Calu3 (cell line): ENCODE measurements at regions of chr2 and their contacts with region 1.

Region 1: DNA sequence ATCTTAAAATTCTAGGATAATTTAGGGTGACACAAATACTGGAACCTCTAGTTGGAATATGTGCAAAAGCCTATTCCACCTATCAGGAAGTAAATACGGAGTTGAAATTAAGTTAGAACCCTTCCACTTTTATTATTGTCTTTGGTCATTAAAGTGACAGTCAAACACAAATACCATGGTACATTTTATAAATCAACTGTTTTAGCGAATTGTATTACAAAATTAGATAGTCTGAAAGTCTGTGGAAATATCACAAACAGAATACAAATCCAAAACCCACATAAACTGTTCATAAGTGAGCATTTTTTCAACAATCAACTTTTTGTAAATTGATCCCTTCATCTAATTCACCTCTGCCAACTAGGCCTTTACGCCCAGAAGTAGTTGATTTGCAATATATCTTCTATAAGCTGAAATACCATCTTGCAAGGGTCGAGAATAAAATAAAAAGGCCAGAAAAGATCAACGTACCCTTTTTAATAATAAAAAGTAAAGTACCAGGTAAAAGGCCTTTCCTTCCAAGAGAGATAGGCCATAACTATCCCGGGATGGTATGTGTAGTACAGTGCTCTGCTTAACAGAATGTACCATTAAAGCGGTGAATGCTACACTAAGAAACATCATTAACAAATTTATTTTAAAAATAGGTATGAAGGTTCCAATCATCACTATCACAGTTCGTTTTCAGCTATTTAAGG is 1.3 kb downstream of the USP34 start:
- DNase-seq: no peak
- H3K4me3 Mint-ChIP-seq: peak overlapping the region; percentile 90
- H3K27ac Mint-ChIP-seq: peak overlapping the region; percentile 95
- H3K4me1 Mint-ChIP-seq: no peaks in the 10 kb centered on the region
- H3K27me3 Mint-ChIP-seq: no peaks in the 10 kb centered on the region
- CTCF ChIP-seq: no peak

Region 2: GRCh38 chr2:61426267-61426897 is 43.2 kb before region 1 on chr2:
- CTCF ChIA-PET with region 1: no interaction called
- intact Hi-C with region 1: loop called (anchors 5 kb)
- DNase-seq: peak; percentile 73
- H3K4me3 Mint-ChIP-seq: no peak overlapping the region
- H3K27ac Mint-ChIP-seq: no peak overlapping the region
- H3K4me1 Mint-ChIP-seq: peaks cover 11% of the 10 kb centered on the region
- H3K27me3 Mint-ChIP-seq: no peaks in the 10 kb centered on the region
- CTCF ChIP-seq: peak; percentile 49